ENCODE measurements at regions of chr3 and their contacts with region 1.

Region 1: GRCh38 chr3:15797642-15798303 is at the start of gene ANKRD28:
- DNase-seq: peak; percentile 81
- H3K4me3 Mint-ChIP-seq: peak within 1 kb of the TSS; percentile 89
- H3K27ac Mint-ChIP-seq: peak within 1 kb of the TSS; percentile 97
- H3K4me1 Mint-ChIP-seq: peaks cover 23% of the 10 kb centered on the region
- H3K27me3 Mint-ChIP-seq: no peaks in the 10 kb centered on the region
- CTCF ChIP-seq: peak; percentile 23
- total RNA-seq, gene ANKRD28: 71.7 and 79.0 TPM in 2 replicates

Region 2: DNA sequence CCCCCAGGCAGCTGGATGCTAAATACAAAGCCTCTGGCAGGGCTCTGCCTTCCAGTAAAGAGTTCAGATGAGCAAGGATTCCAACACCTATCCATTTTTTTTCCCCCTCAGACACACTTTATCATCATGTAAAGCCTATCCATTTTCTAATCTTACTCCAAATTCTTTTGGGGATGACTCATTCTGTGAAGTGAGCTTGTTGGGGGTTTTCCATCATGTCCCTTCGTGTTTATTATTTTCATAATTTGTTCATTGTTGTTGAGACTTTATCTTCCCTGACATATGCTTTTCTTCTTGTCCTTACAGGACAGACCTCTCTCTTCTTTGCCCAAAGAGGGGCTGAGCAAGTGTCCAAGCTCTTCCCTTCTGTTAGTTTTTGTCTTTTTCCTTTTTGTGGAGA is 430.7 kb before region 1 on chr3:
- CTCF ChIA-PET with region 1: no interaction called
- POLR2A ChIA-PET with region 1: no interaction called
- intact Hi-C with region 1: no loop called
- DNase-seq: peak; percentile 18
- H3K4me3 Mint-ChIP-seq: no peak overlapping the region
- H3K27ac Mint-ChIP-seq: no peak overlapping the region
- H3K4me1 Mint-ChIP-seq: peaks cover 18% of the 10 kb centered on the region
- H3K27me3 Mint-ChIP-seq: no peaks in the 10 kb centered on the region
- CTCF ChIP-seq: no peak

Region 3: GRCh38 chr3:15601397-15602145 is 196.2 kb before region 1 on chr3 and contains the starts of genes BTD and HACL1:
- CTCF ChIA-PET with region 1: no interaction called
- POLR2A ChIA-PET with region 1: interaction called, 11 read pairs
- intact Hi-C with region 1: no loop called
- DNase-seq: peak; percentile 99
- H3K4me3 Mint-ChIP-seq: peak within 1 kb of the TSS; percentile 100
- H3K27ac Mint-ChIP-seq: peak within 1 kb of the TSS; percentile 95
- H3K4me1 Mint-ChIP-seq: peaks cover 28% of the 10 kb centered on the region
- H3K27me3 Mint-ChIP-seq: no peaks in the 10 kb centered on the region
- CTCF ChIP-seq: no peak
- total RNA-seq, gene BTD: 5.9 and 7.2 TPM in 2 replicates
- total RNA-seq, gene HACL1: 19.6 and 21.0 TPM in 2 replicates

Region 4: GRCh38 chr3:15629860-15630597 is 167.7 kb before region 1 on chr3:
- CTCF ChIA-PET with region 1: interaction called, 11 read pairs
- POLR2A ChIA-PET with region 1: interaction called, 8 read pairs
- intact Hi-C with region 1: loop called (anchors 5 kb)
- DNase-seq: peak; percentile 90
- H3K4me3 Mint-ChIP-seq: peak overlapping the region; percentile 50
- H3K27ac Mint-ChIP-seq: peak overlapping the region; percentile 67
- H3K4me1 Mint-ChIP-seq: peaks cover 35% of the 10 kb centered on the region
- H3K27me3 Mint-ChIP-seq: no peaks in the 10 kb centered on the region
- CTCF ChIP-seq: peak; percentile 72

Region 5: DNA sequence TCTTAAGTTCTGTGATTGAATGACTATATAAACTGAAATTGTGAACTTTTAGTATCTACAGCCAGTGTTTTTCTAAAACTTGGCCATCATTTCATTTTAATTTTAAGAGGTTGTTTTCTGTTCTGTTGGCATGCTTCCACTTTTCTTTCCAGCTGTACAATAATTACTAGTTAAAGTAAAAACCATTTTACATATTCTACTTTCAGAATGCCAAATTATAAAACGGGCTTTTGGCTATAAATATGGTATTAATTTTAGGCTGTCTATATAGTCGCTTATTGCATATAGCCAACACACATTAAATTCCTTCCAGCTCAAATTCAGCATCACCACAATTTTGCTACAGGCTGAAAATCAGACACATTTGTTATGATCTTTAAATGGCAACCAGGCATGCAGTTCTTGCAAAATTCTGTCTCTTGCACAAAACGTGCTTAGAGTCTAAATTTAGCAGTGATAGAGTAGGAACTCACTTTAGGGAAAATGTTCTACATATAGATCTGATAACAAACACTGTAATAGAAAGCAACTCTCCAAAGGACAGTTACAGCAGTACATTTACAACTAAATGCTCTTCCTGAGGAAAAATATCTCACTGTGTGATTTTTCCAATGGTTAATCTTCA is 115.1 kb before region 1 on chr3:
- CTCF ChIA-PET with region 1: no interaction called
- POLR2A ChIA-PET with region 1: interaction called, 3 read pairs
- intact Hi-C with region 1: loop called (anchors 5 kb)
- DNase-seq: peak; percentile 40
- H3K4me3 Mint-ChIP-seq: no peak overlapping the region
- H3K27ac Mint-ChIP-seq: peak overlapping the region; percentile 12
- H3K4me1 Mint-ChIP-seq: no peaks in the 10 kb centered on the region
- H3K27me3 Mint-ChIP-seq: no peaks in the 10 kb centered on the region
- CTCF ChIP-seq: no peak

Region 6: DNA sequence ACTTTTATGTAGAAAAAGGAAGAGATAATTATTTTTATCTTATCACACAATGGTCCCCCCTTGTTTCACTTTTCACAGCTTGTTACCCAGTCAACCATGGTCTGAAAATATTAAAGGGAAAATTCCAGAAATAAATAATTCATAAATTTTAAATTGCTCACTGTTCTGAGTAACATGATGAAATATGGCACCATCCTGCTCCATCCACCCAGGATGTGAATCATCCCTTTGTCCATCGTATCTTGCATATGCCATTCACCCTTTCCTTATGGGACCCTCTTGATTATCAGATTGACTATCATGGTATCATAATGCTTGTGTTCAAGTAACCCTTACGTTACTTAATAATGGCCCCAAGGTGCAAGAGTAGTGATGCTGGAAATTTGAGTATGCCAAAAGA is 43.7 kb before region 1 on chr3:
- CTCF ChIA-PET with region 1: interaction called, 4 read pairs
- POLR2A ChIA-PET with region 1: interaction called, 3 read pairs
- intact Hi-C with region 1: loop called (anchors 1 kb)
- DNase-seq: peak; percentile 55
- H3K4me3 Mint-ChIP-seq: no peak overlapping the region
- H3K27ac Mint-ChIP-seq: peak overlapping the region; percentile 44
- H3K4me1 Mint-ChIP-seq: peaks cover 27% of the 10 kb centered on the region
- H3K27me3 Mint-ChIP-seq: no peaks in the 10 kb centered on the region
- CTCF ChIP-seq: no peak

Region 7: GRCh38 chr3:15783361-15783969 is 14.3 kb before region 1 on chr3:
- CTCF ChIA-PET with region 1: interaction called, 8 read pairs
- POLR2A ChIA-PET with region 1: interaction called, 293 read pairs
- intact Hi-C with region 1: loop called (anchors 1 kb)
- DNase-seq: no peak
- H3K4me3 Mint-ChIP-seq: peak overlapping the region; percentile 60
- H3K27ac Mint-ChIP-seq: peak overlapping the region; percentile 94
- H3K4me1 Mint-ChIP-seq: peaks cover 62% of the 10 kb centered on the region
- H3K27me3 Mint-ChIP-seq: no peaks in the 10 kb centered on the region
- CTCF ChIP-seq: no peak